Kidney (tissue), 22 donors: ENCODE measurements at regions of chr1 and their contacts with region 1.

Region 1: DNA sequence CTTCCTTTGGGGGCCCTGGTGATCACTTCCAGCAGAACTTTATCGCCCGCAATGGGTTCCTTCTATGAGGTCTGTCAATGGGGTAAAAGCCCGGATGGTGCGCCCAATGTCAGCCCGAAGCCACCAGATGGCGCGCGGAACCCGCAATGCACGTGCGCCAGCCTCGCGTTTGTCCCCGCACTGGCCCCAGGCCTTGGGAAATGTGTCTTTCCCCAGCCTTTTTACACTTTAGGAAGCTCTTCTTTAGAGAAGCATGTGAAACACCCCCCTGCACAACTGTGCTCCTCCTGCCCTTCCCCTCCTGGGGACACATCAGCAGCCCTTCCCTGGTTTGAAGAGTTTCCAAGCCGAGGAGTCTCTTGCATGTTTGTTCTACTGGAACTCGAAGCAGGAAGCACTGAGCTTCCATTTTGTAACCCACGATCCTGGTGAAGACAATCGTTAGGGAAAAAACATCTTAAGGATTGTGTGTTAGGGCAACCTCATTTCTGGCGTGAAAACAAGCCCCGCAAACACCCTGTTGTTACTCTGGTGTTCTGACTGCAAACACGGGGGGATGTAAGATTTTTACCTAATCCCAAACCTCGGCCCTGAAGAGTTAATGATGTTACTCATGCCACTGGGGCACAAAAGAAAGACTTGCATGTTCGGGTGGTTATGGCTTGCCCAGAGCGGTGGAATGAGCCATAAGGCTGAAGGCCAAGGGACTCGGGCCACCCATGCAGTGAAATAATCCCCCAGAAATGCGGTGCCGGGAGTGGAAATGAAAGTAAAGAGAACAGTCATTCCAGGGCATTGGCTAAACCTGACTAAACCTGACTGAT is 20.4 kb upstream of the TARBP1 start:
- DNase-seq: peak; percentile 92 to 95 (median 93)
- H3K4me3 ChIP-seq: peak overlapping the region in 2 of 3 donors; percentile 42 to 52
- H3K27ac ChIP-seq: peak overlapping the region; percentile 90 to 94
- H3K4me1 ChIP-seq: peaks cover 0 to 18% (median 14%) of the 10 kb centered on the region in 3 donors
- H3K27me3 ChIP-seq: no peaks in the 10 kb centered on the region
- CTCF ChIP-seq: peak; percentile 96

Region 2: DNA sequence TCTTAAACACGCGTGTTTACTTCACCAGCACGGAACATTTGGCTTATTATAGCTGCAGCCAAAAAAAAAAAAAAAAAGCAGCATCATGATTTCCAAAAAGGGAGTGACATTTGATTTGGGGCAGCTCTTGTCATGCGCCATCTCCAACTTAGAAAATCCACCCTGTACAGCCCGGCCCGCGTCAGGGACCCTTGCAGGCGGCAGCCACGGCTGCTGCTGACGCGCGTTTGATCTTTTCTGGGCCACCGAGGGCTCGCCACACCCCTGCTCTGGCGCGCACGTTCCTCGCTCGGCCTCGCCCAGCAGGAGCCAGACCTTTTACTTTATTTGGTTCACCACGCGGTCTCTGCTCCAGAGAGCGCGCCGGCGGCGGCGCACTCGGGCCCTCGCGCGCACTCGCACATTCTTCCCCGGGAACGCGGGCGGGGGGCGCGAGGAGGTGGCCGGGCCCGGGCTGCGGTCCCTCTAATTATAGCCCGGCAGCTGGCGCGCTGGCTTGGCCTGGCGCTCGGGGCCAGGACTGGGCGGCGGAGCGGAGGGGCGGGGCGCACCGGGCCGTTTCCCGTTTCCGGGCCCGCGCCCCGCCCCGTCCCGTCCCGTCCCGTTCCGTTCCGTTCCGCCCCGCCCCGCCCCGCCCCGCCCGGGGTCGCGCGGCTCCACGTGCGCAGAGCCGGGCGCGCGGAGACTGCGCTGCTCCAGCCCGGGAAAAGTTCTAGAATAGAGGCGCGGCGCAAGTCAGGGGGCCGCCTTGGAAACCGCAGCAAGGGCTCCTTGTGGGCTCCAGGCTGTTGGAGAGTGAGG is 100.5 kb after region 1 on chr1:
- intact Hi-C with region 1: loop called (anchors 10 kb)
- DNase-seq: peak; percentile 90 to 96 (median 93)
- H3K4me3 ChIP-seq: peak overlapping the region; percentile 50 to 63 (median 60)
- H3K27ac ChIP-seq: peak overlapping the region; percentile 100
- H3K4me1 ChIP-seq: peaks cover 21 to 27% (median 22%) of the 10 kb centered on the region in 3 donors
- H3K27me3 ChIP-seq: no peaks in the 10 kb centered on the region
- CTCF ChIP-seq: peak; percentile 6

Region 3: GRCh38 chr1:234836045-234836681 is 336.8 kb after region 1 on chr1:
- intact Hi-C with region 1: loop called (anchors 10 kb)
- DNase-seq: no peak
- H3K4me3 ChIP-seq: no peak overlapping the region
- H3K27ac ChIP-seq: no peak overlapping the region
- H3K4me1 ChIP-seq: no peaks in the 10 kb centered on the region
- H3K27me3 ChIP-seq: no peaks in the 10 kb centered on the region
- CTCF ChIP-seq: no peak